ENCODE measurements at regions of chr1 and their contacts with region 1.

Region 1: GRCh38 chr1:201792534-201793305 is 36.2 kb upstream of the IPO9 start:
- DNase-seq: peak; percentile 66
- ATAC-seq: peak; percentile 78
- H3K4me3 Mint-ChIP-seq: no peak overlapping the region
- H3K27ac Mint-ChIP-seq: peak overlapping the region; percentile 50
- H3K4me1 Mint-ChIP-seq: peaks cover 25% of the 10 kb centered on the region
- H3K27me3 Mint-ChIP-seq: peaks cover 3% of the 10 kb centered on the region

Region 2: GRCh38 chr1:201559679-201560162 is 233.0 kb before region 1 on chr1:
- CTCF ChIA-PET with region 1: interaction called, 56 read pairs
- DNase-seq: peak; percentile 76
- ATAC-seq: peak; percentile 94
- H3K4me3 Mint-ChIP-seq: no peak overlapping the region
- H3K27ac Mint-ChIP-seq: no peak overlapping the region
- H3K4me1 Mint-ChIP-seq: peaks cover 3% of the 10 kb centered on the region
- H3K27me3 Mint-ChIP-seq: peaks cover 4% of the 10 kb centered on the region

Region 3: DNA sequence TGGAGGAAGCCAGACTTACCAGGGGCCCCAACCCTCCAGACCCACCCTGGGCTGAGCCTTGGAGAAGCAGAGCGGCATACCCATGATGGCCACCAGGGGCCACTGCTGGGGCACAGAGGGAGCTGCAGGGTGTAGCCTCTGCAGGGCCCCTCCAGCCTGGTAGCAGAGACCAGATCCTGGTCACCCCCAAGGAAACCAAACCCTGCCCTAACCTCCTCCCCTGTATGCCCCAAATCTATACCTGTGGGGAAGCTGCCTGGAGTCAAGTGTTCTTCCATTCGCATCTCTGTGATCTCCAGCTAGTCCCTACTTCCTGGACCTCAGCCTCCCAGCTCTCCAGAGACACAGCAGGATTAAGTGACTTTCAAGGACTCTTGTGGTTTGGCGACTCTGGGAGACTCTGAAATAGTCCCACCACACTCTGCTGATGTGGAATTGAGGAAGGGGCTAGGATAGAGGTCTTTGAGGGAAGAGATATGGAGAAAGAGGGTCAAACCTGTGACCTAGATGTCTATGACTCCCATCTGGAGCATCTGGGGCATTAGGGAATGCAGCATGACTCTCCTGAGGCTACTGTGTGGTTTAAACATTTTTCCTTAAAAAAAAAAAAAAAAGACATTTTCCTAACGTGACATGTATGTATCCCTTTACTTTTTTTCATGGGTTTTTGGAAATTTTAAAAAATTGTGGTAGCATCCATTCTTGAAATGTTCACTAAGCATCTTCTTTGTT is 83.0 kb before region 1 on chr1:
- CTCF ChIA-PET with region 1: interaction called, 228 read pairs
- DNase-seq: peak; percentile 73
- ATAC-seq: peak; percentile 95
- H3K4me3 Mint-ChIP-seq: no peak overlapping the region
- H3K27ac Mint-ChIP-seq: no peak overlapping the region
- H3K4me1 Mint-ChIP-seq: no peaks in the 10 kb centered on the region
- H3K27me3 Mint-ChIP-seq: peaks cover 9% of the 10 kb centered on the region

Region 4: DNA sequence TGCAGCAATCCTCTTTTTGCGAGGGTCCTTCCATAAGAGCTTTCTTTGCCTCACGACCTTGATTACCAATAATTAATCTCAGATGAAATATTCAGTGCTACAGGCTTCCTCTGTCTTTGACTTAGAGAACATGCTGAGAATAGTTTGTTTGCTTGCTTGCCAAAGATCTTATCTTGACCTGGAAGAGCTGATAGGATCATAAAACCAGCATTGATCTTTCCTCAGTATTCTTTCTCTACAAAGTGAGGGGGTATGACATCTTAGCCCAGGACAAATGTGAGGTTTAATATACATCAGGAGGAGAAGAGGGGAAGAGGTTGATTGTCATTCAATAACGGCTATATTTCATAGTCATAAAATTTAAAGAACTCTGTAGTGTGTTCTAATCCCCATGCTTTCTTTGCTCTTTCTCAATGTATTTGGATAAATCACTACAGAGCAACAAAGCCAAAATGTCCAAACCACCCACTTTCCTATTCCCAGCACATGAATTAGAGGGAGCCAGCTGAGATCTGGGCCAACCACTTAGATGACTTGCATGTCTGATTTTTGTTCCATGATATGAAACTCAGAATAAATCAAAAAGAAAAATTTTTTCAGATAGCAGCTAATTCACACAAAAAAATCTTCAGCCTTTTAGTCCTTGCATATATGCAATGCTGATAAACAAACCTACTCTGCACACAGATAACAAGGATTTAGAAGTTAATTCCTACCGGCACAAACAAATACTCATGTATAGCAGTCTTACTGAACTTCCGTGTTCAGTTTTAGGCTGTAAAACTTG is 14.2 kb before region 1 on chr1:
- CTCF ChIA-PET with region 1: interaction called, 17 read pairs
- DNase-seq: no peak
- ATAC-seq: no peak
- H3K4me3 Mint-ChIP-seq: no peak overlapping the region
- H3K27ac Mint-ChIP-seq: no peak overlapping the region
- H3K4me1 Mint-ChIP-seq: no peaks in the 10 kb centered on the region
- H3K27me3 Mint-ChIP-seq: peaks cover 4% of the 10 kb centered on the region

Region 5: DNA sequence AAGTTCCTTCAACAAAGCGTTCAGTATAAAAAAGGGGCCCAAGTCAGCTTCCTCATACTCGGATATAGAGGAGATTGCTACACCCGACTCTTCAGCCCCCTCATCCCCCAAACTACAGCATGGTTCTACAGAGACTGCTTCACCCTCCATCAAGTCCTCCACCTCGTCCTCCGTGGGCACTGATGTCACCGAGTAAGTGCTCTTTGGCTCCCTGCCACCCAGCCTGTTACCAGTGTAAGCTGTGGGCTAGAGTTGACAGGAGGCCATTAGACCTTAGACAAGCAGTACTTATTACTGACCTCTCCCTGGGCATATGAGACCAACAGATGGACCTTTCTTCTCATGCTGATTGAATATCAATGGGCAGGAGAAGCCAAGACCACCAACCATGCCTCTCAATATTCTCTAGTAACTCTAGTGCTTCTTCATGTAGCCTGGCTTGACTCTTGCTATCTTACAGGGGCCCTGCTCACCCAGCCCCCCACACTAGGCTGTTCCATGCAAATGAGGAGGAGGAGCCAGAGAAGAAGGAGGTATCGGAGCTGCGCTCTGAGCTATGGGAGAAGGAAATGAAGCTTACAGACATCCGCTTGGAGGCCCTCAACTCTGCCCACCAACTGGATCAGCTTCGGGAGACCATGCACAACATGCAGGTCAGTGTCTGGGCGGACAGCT is 15.4 kb after region 1 on chr1:
- CTCF ChIA-PET with region 1: interaction called, 28 read pairs
- DNase-seq: no peak
- ATAC-seq: no peak
- H3K4me3 Mint-ChIP-seq: no peak overlapping the region
- H3K27ac Mint-ChIP-seq: no peak overlapping the region
- H3K4me1 Mint-ChIP-seq: no peaks in the 10 kb centered on the region
- H3K27me3 Mint-ChIP-seq: no peaks in the 10 kb centered on the region

Measured in activated CD8-positive, alpha-beta memory T cell treated with anti-CD3 and anti-CD28 coated beads, Interleukin-2, amount 10 ng/mL, durations not matched to agents 7 days and 5 days (primary cell).